ENCODE measurements at regions of chr15 and their contacts with region 1.

Region 1: GRCh38 chr15:57527382-57528091 is 64.2 kb upstream of the MYZAP start:
- DNase-seq: peak; percentile 58 to 70
- H3K4me3 ChIP-seq: no peak overlapping the region
- H3K4me3 Mint-ChIP-seq: no peak overlapping the region
- H3K27ac Mint-ChIP-seq: no peak overlapping the region
- H3K4me1 ChIP-seq: no peaks in the 10 kb centered on the region
- H3K4me1 Mint-ChIP-seq: peaks cover under 1% of the 10 kb centered on the region
- H3K27me3 ChIP-seq: no peaks in the 10 kb centered on the region
- H3K27me3 Mint-ChIP-seq: no peaks in the 10 kb centered on the region
- CTCF ChIP-seq: peak; percentile 45 to 59

Region 2: GRCh38 chr15:57158589-57158988 is 368.9 kb before region 1 on chr15:
- CTCF ChIA-PET with region 1: no interaction called
- POLR2A ChIA-PET with region 1: no interaction called
- intact Hi-C with region 1: loop called (anchors 10 kb)
- DNase-seq: no peak
- H3K4me3 ChIP-seq: no peak overlapping the region
- H3K4me3 Mint-ChIP-seq: no peak overlapping the region
- H3K27ac Mint-ChIP-seq: no peak overlapping the region
- H3K4me1 ChIP-seq: no peaks in the 10 kb centered on the region
- H3K4me1 Mint-ChIP-seq: peaks cover 6% of the 10 kb centered on the region
- H3K27me3 ChIP-seq: no peaks in the 10 kb centered on the region
- H3K27me3 Mint-ChIP-seq: no peaks in the 10 kb centered on the region
- CTCF ChIP-seq: no peak

Region 3: GRCh38 chr15:57340682-57341259 is 186.8 kb before region 1 on chr15:
- CTCF ChIA-PET with region 1: interaction called, 148 read pairs
- POLR2A ChIA-PET with region 1: interaction called, 3 read pairs
- intact Hi-C with region 1: loop called (anchors 1 kb)
- DNase-seq: peak; percentile 61 to 62
- H3K4me3 ChIP-seq: no peak overlapping the region
- H3K4me3 Mint-ChIP-seq: no peak overlapping the region
- H3K27ac Mint-ChIP-seq: no peak overlapping the region
- H3K4me1 ChIP-seq: no peaks in the 10 kb centered on the region
- H3K4me1 Mint-ChIP-seq: peaks cover 6% of the 10 kb centered on the region
- H3K27me3 ChIP-seq: no peaks in the 10 kb centered on the region
- H3K27me3 Mint-ChIP-seq: no peaks in the 10 kb centered on the region
- CTCF ChIP-seq: peak; percentile 81 to 89

Region 4: DNA sequence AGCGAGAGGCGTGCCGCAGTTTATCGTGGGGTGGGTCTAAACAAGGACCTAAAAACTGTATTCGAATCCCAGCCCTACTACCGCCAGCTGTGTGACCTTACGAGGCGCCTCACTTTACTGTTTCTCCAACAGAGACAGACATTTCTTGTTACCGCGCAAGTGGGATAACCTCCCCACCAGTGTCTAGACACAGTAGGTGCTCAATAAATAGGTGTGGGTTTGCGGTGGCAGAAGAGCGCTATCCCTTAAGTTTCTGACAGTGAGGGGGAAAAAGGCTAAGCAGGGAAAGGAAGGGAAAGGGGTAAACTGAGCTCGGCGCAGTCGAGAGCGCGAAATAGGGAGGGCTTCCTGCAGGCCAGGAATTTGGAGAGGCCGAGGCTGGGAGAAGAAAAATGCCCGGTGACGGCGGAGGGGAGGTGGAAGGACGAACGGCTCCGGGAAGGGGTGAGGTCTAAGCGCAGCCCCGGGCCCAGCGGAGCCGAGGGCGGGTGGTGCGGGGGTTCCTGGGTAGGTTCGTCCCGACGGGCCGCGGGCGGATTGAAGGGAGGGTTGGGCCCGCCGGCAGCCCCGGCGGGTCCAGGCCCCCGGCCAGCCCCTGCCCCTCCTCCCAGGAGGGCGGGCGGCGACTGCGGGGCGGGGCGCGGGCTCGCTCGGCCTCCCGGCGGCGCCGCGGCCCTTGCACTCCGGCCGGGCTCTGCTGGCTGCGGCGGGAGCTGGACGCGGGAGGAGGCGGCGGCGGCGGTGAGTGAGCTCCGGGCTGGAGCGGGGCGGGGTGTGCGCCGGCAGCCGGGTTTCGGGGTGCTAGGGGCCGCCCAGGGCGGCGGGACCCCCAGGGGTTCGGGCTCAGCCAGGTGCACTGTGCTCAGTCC is 151.5 kb before region 1 on chr15 and contains the start of gene CGNL1:
- CTCF ChIA-PET with region 1: interaction called, 35 read pairs
- POLR2A ChIA-PET with region 1: no interaction called
- intact Hi-C with region 1: loop called (anchors 1 kb)
- DNase-seq: peak in 1 of 2 experiments; percentile 75
- H3K4me3 ChIP-seq: peak within 1 kb of the TSS; percentile 79
- H3K4me3 Mint-ChIP-seq: peak within 1 kb of the TSS; percentile 89
- H3K27ac Mint-ChIP-seq: peak within 1 kb of the TSS; percentile 53
- H3K4me1 ChIP-seq: peaks cover 15% of the 10 kb centered on the region
- H3K4me1 Mint-ChIP-seq: peaks cover 18% of the 10 kb centered on the region
- H3K27me3 ChIP-seq: no peaks in the 10 kb centered on the region
- H3K27me3 Mint-ChIP-seq: no peaks in the 10 kb centered on the region
- CTCF ChIP-seq: no peak
- total RNA-seq, gene CGNL1: 8.3 and 9.4 TPM in 2 replicates

Region 5: GRCh38 chr15:57476533-57476975 is 51.0 kb before region 1 on chr15:
- CTCF ChIA-PET with region 1: interaction called, 6 read pairs
- POLR2A ChIA-PET with region 1: no interaction called
- intact Hi-C with region 1: loop called (anchors 5 kb)
- DNase-seq: no peak
- H3K4me3 ChIP-seq: no peak overlapping the region
- H3K4me3 Mint-ChIP-seq: no peak overlapping the region
- H3K27ac Mint-ChIP-seq: no peak overlapping the region
- H3K4me1 ChIP-seq: peaks cover 28% of the 10 kb centered on the region
- H3K4me1 Mint-ChIP-seq: peaks cover 29% of the 10 kb centered on the region
- H3K27me3 ChIP-seq: no peaks in the 10 kb centered on the region
- H3K27me3 Mint-ChIP-seq: no peaks in the 10 kb centered on the region
- CTCF ChIP-seq: no peak

Region 6: DNA sequence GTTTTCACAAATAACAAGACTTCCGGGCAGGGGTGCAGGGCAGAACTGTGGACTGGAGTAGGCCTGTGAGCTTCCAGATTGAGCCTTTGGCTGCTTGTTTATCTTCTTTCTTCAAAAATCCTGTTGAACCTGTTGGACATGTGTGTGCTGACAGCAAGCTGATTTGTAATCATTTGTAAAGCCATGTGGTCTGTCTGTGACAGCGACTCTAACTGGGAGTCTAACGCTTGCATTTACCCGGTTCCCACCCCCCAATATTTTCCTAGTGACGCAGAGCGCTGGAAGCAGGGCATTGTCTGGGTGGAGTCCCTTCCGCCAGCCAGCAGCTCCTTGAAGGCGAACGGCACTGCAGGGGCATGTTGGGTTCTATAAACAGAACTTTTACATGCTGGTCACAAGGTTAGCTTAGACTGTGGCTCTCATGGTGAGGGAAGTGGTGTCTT is 21.6 kb before region 1 on chr15:
- CTCF ChIA-PET with region 1: interaction called, 14 read pairs
- POLR2A ChIA-PET with region 1: interaction called, 3 read pairs
- intact Hi-C with region 1: loop called (anchors 1 kb)
- DNase-seq: peak; percentile 90 to 93
- H3K4me3 ChIP-seq: no peak overlapping the region
- H3K4me3 Mint-ChIP-seq: peak overlapping the region; percentile 64
- H3K27ac Mint-ChIP-seq: peak overlapping the region; percentile 90
- H3K4me1 ChIP-seq: peaks cover 66% of the 10 kb centered on the region
- H3K4me1 Mint-ChIP-seq: peaks cover 60% of the 10 kb centered on the region
- H3K27me3 ChIP-seq: no peaks in the 10 kb centered on the region
- H3K27me3 Mint-ChIP-seq: no peaks in the 10 kb centered on the region
- CTCF ChIP-seq: no peak

Region 7: DNA sequence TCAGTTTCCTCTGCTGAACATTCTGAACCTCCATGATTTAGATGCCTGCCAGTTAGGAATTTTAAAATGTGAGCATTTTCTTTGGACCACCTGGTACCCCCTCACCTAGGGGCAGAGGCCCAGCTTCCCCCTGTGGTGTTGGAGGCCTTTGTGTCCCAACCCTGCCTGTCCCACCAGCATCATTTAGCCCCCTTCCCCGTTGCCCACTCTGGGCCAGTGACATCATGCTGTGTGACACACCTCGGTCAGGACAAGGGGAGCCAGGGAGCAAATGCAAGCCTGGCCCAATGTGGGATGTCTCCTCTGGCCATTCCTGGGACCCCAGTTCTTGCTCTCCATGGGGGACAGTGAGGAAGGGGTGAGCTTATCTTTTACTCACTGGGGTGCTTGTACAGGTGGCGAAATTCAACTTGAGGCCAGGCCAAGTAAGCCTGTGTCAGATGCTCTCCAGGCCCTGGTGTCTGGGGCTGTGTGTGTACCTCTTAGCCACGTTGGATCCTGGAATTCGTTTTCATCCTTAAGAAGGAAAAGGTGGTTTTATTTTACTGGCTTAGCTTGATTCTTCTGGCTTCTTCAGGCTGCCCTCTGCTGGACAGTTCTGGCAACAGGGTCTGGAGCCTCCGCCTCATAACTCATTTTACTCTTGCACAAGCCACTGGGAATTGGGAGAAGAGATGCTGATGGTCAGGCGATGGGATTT is 14.4 kb after region 1 on chr15:
- CTCF ChIA-PET with region 1: interaction called, 19 read pairs
- POLR2A ChIA-PET with region 1: no interaction called
- intact Hi-C with region 1: loop called (anchors 2 kb)
- DNase-seq: peak; percentile 74 to 80
- H3K4me3 ChIP-seq: no peak overlapping the region
- H3K4me3 Mint-ChIP-seq: no peak overlapping the region
- H3K27ac Mint-ChIP-seq: no peak overlapping the region
- H3K4me1 ChIP-seq: 0 out of 2 replicates have a peak, but pooled peaks cover 3% of the 10 kb centered on the region
- H3K4me1 Mint-ChIP-seq: peaks cover 6% of the 10 kb centered on the region
- H3K27me3 ChIP-seq: no peaks in the 10 kb centered on the region
- H3K27me3 Mint-ChIP-seq: no peaks in the 10 kb centered on the region
- CTCF ChIP-seq: peak; percentile 76 to 84

Region 8: DNA sequence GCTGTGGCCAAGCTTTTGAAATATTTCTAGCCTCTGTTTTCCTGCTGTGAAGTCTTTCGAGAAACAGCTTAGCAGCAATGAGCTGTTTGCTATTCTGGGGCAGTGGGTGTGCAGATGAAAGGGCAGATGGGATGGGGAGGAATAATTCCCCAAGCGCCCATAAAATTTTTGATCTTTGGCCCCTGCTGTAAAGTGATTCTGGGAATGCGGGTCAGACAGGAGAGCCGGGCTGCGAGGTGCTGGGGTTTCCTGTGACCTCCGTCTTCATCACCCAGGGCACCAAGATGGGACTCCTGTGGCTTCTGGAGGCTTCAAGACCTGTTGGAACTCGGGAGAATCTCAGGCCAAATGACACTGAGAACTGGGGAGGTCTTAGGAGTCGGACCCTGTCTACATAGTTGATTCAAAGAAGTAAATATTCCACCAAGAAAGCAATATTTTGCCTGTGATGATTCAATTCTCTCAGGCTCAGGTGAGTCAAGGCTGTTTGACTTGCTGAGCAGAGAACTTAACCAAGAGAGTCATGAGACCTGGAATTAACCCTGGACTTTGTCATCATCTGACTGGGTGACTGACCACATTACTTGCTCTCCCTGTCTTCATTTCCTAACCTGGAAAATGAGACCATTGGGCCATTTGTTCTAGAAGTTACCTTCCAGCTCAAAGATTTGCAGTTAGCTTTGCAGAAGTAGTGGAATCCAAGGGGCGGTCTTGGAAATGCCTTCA is 265.4 kb after region 1 on chr15:
- CTCF ChIA-PET with region 1: no interaction called
- POLR2A ChIA-PET with region 1: no interaction called
- intact Hi-C with region 1: no loop called
- DNase-seq: peak; percentile 27 to 55
- H3K4me3 ChIP-seq: no peak overlapping the region
- H3K4me3 Mint-ChIP-seq: no peak overlapping the region
- H3K27ac Mint-ChIP-seq: no peak overlapping the region
- H3K4me1 ChIP-seq: peaks cover 16% of the 10 kb centered on the region
- H3K4me1 Mint-ChIP-seq: peaks cover 12% of the 10 kb centered on the region
- H3K27me3 ChIP-seq: no peaks in the 10 kb centered on the region; the same call in 1 of the 2 replicates
- H3K27me3 Mint-ChIP-seq: peaks cover 4% of the 10 kb centered on the region
- CTCF ChIP-seq: no peak